CD8-positive, alpha-beta T cell (primary cell): ENCODE measurements at regions of chr1 and their contacts with region 1.

Region 1: GRCh38 chr1:205284343-205285144 is 37.0 kb downstream of the NUAK2 start:
- DNase-seq: peak; percentile 78 to 96 (median 93)
- ATAC-seq: peak; percentile 62
- H3K4me3 ChIP-seq: peak overlapping the region; percentile 34 to 40
- H3K4me3 Mint-ChIP-seq: peak overlapping the region; percentile 83
- H3K27ac ChIP-seq: peak overlapping the region; percentile 56 to 71
- H3K27ac Mint-ChIP-seq: peak overlapping the region; percentile 96
- H3K4me1 ChIP-seq: peaks cover 81% of the 10 kb centered on the region
- H3K4me1 Mint-ChIP-seq: peaks cover 85% of the 10 kb centered on the region
- H3K27me3 ChIP-seq: no peaks in the 10 kb centered on the region
- H3K27me3 Mint-ChIP-seq: no peaks in the 10 kb centered on the region
- CTCF ChIP-seq: no peak

Region 2: DNA sequence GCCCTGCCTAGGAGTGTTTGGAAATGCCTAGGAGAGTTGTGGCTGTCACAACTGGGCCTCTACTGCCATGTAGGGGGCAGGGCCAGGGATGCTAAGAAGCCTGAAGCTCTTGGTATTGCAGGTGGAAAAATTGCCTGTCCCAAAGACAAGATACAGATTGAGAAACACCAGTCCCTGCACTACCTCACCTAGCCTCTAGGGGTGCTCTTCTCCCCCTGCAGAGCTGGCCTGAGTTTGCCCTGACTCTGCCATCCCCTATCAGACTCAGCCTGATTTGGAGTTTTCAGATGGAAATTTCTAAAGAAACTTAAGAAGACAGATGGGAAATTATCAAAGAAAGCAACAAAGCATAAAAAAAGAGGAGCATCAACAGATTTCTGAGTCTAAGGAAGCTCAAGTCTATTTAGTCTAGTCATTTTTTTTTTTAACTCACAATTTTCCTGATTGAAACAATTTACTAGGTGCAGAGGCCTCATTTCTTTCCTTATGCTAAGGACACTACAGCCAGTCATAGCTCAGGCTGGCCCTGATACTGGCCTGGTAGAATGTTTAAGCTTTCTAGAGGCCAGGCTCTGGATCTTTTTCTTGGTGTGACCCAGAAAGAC is 537.6 kb before region 1 on chr1:
- CTCF ChIA-PET with region 1: no interaction called
- POLR2A ChIA-PET with region 1: no interaction called
- intact Hi-C with region 1: no loop called
- DNase-seq: peak; percentile 10 to 72 (median 52)
- ATAC-seq: peak; percentile 86
- H3K4me3 ChIP-seq: no peak overlapping the region
- H3K4me3 Mint-ChIP-seq: no peak overlapping the region
- H3K27ac ChIP-seq: no peak overlapping the region
- H3K27ac Mint-ChIP-seq: no peak overlapping the region
- H3K4me1 ChIP-seq: no peaks in the 10 kb centered on the region
- H3K4me1 Mint-ChIP-seq: no peaks in the 10 kb centered on the region
- H3K27me3 ChIP-seq: no peaks in the 10 kb centered on the region
- H3K27me3 Mint-ChIP-seq: peaks cover 8% of the 10 kb centered on the region
- CTCF ChIP-seq: peak; percentile 98

Region 3: DNA sequence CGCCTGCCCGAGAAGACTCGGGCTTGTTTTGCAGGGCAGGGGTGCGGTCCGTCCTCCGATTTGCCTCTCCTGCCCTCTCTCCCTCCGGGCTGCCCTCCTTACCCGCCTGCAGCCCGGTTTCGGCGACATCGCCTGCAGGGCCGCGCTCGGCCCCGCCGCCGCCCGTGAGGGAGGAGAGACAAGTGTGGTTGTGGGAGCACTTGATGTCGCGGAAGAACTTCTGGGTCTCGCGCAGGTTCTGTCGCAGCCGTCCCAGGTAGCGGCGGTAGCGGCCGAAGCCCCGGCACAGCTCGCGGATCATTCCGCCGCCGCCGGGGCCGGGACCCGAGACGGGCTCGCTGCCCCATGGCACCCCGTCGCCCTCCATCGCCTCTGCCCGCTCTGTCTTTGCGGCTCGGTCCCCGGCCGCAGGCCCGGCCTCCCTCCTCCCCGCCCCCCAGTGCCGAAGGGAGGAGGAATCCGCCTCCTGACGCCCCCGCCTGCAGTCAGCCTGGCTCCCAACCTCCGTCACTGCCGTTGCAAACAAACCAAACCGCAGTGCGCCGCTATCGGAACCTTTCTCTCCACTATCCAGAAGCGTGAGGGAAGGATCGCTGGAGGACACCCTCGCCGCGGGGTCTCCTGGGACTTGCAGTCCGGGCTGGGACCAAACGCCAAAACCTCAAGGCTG is 73.2 kb before region 1 on chr1 and contains the start of gene DSTYK:
- CTCF ChIA-PET with region 1: no interaction called
- POLR2A ChIA-PET with region 1: interaction called, 4 read pairs
- intact Hi-C with region 1: loop called (anchors 1 to 2 kb)
- DNase-seq: peak; percentile 83 to 96 (median 91)
- ATAC-seq: peak; percentile 92
- H3K4me3 ChIP-seq: peak within 1 kb of the TSS; percentile 55 to 93
- H3K4me3 Mint-ChIP-seq: peak within 1 kb of the TSS; percentile 96
- H3K27ac ChIP-seq: peak within 1 kb of the TSS; percentile 58 to 80
- H3K27ac Mint-ChIP-seq: peak within 1 kb of the TSS; percentile 98
- H3K4me1 ChIP-seq: peaks cover 15% of the 10 kb centered on the region
- H3K4me1 Mint-ChIP-seq: peaks cover 50% of the 10 kb centered on the region
- H3K27me3 ChIP-seq: no peaks in the 10 kb centered on the region
- H3K27me3 Mint-ChIP-seq: no peaks in the 10 kb centered on the region
- CTCF ChIP-seq: no peak
- total RNA-seq, gene DSTYK: 15.4 to 17.2 TPM

Region 4: DNA sequence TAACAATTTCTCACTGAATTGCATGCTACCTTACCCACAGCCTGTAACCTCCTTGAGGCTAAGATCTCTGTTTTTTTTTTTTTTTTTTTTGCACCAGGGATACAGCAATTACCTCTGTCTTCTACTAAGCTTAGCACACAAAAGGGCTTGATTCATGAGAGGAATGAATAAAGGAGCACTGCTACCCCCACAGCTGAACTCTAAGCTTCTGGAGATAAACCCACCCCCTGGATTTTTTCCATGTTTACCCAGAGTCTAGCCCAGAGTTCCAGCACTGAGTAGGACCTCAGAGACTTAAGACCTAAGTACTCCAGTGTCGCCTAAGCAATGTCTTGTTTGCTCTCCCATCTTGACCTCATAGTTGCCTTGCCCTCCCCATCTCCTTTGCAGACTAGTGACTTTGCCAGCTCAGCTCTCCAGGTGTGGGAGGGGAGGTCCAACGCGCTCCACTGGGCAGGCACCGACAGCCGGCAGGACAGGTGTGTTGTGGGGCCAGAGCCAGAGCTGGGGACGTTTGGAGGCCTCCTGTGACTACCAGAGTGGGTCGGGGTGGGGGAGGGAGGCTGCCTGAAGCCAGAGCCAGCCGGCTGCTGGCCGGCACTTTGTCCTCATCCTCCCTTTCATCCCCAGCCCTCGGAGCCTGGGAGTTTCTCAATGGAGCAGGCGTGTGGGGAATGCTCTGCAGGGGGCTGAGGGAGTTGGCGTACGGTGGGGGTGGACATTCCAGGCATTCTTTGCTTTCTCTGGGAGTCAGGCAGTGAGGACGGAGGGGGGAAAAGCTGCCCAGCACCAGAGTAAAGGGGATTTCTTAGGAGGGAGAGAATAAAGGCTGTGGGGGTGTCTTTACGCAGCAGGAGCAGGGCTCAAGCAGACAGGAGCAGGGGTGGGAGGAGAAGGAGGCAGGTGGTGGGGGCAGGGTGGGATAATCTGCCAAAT is 16.6 kb after region 1 on chr1:
- CTCF ChIA-PET with region 1: interaction called, 17 read pairs
- POLR2A ChIA-PET with region 1: interaction called, 17 read pairs
- intact Hi-C with region 1: loop called in 1 of 2 experiments (anchors 2 kb)
- DNase-seq: no peak
- ATAC-seq: no peak
- H3K4me3 ChIP-seq: no peak overlapping the region
- H3K4me3 Mint-ChIP-seq: no peak overlapping the region
- H3K27ac ChIP-seq: no peak overlapping the region
- H3K27ac Mint-ChIP-seq: peak overlapping the region; percentile 41
- H3K4me1 ChIP-seq: peaks cover 32% of the 10 kb centered on the region
- H3K4me1 Mint-ChIP-seq: peaks cover 58% of the 10 kb centered on the region
- H3K27me3 ChIP-seq: no peaks in the 10 kb centered on the region
- H3K27me3 Mint-ChIP-seq: no peaks in the 10 kb centered on the region
- CTCF ChIP-seq: no peak

Region 5: GRCh38 chr1:205321164-205321958 is 36.8 kb after region 1 on chr1 and contains the start of gene NUAK2:
- CTCF ChIA-PET with region 1: interaction called, 1,393 read pairs
- POLR2A ChIA-PET with region 1: interaction called, 161 read pairs
- intact Hi-C with region 1: loop called (anchors 1 kb)
- DNase-seq: peak; percentile 56 to 92 (median 86)
- ATAC-seq: peak; percentile 88
- H3K4me3 ChIP-seq: peak within 1 kb of the TSS; percentile 73 to 99
- H3K4me3 Mint-ChIP-seq: peak within 1 kb of the TSS; percentile 98
- H3K27ac ChIP-seq: peak within 1 kb of the TSS; percentile 68 to 72
- H3K27ac Mint-ChIP-seq: peak within 1 kb of the TSS; percentile 96
- H3K4me1 ChIP-seq: peaks cover 50% of the 10 kb centered on the region
- H3K4me1 Mint-ChIP-seq: peaks cover 71% of the 10 kb centered on the region
- H3K27me3 ChIP-seq: no peaks in the 10 kb centered on the region
- H3K27me3 Mint-ChIP-seq: no peaks in the 10 kb centered on the region
- CTCF ChIP-seq: peak; percentile 32
- total RNA-seq, gene NUAK2: 17.1 to 18.3 TPM

Region 6: DNA sequence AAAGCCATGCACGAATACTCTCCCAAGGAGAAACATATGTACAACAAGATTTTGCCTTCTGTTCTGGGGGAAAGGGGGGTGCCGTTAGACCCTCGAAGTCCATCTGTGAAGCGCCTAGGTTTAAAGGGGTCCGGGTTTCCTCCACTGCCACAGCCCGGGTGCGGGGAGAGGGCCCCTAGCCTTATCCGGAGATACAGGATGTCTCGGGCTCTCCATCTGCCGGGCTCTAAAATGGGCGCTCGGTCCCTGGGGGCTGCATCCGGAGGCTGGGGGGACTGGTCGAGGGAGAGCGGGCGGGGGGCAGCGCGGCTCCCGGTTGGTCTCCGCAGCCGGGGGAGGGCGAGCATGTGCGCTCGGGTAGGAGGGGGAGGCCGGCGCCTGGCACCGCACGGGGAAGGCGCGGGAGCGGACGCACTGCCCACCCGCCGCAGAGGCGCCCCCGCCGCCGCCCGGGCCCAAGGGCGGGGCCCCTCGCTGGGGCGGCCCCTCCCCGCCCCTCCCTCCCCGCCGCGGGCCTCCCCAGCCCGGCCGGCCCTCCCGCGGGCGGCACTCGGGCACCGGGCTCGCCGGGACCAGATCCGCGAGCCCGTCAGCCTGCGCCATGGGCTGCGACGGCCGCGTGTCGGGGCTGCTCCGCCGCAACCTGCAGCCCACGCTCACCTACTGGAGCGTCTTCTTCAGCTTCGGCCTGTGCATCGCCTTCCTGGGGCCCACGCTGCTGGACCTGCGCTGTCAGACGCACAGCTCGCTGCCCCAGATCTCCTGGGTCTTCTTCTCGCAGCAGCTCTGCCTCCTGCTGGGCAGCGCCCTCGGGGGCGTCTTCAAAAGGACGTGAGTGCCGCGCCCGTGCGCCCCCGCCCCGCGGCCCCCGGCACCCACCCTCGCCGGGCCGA is 284.2 kb after region 1 on chr1:
- CTCF ChIA-PET with region 1: no interaction called
- POLR2A ChIA-PET with region 1: no interaction called
- intact Hi-C with region 1: no loop called
- DNase-seq: peak in 2 of 9 experiments; percentile 23 to 36
- ATAC-seq: peak; percentile 31
- H3K4me3 ChIP-seq: no peak overlapping the region
- H3K4me3 Mint-ChIP-seq: peak overlapping the region; percentile 76
- H3K27ac ChIP-seq: no peak overlapping the region
- H3K27ac Mint-ChIP-seq: no peak overlapping the region
- H3K4me1 ChIP-seq: peaks cover 4% of the 10 kb centered on the region
- H3K4me1 Mint-ChIP-seq: peaks cover 5% of the 10 kb centered on the region
- H3K27me3 ChIP-seq: peaks cover 13 to 14% of the 10 kb centered on the region in 2 experiments
- H3K27me3 Mint-ChIP-seq: peaks cover 47% of the 10 kb centered on the region
- CTCF ChIP-seq: no peak

Region 7: DNA sequence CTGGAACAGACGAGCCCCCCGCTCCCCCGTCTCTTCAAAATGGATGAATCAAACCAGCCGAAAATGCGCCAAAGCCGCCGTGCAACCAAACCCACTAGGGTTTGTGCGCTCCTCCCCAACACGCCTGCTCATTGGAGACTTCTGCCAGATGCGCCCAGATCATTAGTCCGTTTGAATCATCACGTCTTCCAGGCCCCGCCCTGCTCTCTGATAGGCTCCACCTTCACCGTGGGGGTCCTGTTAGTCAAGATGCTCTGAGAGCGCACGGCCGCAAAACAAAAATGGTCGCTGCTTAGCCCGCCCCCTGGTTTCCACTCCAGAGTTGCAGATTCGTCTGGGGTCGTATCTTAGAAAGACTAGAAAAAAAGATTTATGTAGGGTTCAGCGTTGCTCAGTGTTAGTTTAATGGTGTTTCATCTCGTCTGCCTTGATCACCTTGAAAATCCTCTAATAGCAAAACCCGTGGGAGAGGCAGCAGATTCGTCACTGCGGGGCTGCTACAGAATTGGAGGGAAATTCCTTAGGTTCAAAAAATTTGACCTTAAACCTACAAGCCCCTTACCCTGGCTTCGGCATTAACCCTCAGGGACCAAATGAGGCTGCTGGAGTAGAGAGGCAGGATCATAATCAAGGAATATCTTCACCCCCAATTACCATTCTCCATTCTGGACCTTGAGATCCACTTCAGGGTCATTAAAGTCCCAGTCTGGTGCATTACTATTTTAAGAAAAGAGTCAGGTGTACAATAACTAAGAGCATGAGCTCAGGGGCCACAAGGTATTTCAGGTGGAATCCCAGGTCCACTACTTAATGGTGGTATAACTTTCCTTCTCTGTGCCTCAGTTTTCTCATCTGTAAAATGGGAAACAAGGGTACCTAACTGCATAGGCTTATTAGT is 465.8 kb after region 1 on chr1 and contains the start of gene NUCKS1:
- CTCF ChIA-PET with region 1: no interaction called
- POLR2A ChIA-PET with region 1: interaction called, 5 read pairs
- intact Hi-C with region 1: loop called (anchors 1 kb)
- DNase-seq: peak; percentile 91 to 99 (median 96)
- ATAC-seq: peak; percentile 77
- H3K4me3 ChIP-seq: peak within 1 kb of the TSS; percentile 78 to 91
- H3K4me3 Mint-ChIP-seq: peak within 1 kb of the TSS; percentile 93
- H3K27ac ChIP-seq: peak within 1 kb of the TSS; percentile 79 to 82
- H3K27ac Mint-ChIP-seq: peak within 1 kb of the TSS; percentile 98
- H3K4me1 ChIP-seq: peaks cover 30% of the 10 kb centered on the region
- H3K4me1 Mint-ChIP-seq: peaks cover 37% of the 10 kb centered on the region
- H3K27me3 ChIP-seq: no peaks in the 10 kb centered on the region
- H3K27me3 Mint-ChIP-seq: no peaks in the 10 kb centered on the region
- CTCF ChIP-seq: no peak
- total RNA-seq, gene NUCKS1: 70.5 to 95.3 TPM

Region 8: DNA sequence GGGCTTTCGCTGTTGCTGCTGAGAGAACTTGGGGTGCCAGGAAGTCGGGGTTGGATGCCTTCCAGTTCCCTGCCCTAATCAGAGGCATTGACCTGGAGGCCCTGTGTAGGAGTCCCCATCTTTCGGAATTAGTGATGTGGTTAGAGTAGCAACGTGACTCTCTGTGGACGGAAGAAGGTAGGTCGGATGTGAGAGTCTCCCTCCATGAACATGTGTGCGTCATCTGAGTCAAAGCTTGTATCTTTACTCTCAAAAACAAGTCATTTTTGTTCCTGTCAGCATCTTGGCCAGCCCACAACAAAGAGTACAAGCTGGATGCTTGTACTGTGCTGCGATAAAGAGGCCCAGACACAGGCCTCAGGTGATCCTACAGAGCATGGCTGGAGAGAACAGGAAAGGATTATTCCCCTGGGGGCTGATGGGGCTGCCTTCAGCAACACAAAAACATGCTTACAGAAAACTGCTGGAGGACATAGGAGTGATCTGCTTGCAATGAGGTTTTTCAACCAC is 1518.7 kb after region 1 on chr1:
- CTCF ChIA-PET with region 1: no interaction called
- POLR2A ChIA-PET with region 1: no interaction called
- intact Hi-C with region 1: loop called in 1 of 2 experiments (anchors 5 kb)
- DNase-seq: peak; percentile 59 to 98 (median 74)
- ATAC-seq: peak; percentile 91
- H3K4me3 ChIP-seq: no peak overlapping the region
- H3K4me3 Mint-ChIP-seq: peak overlapping the region; percentile 40
- H3K27ac ChIP-seq: peak overlapping the region; percentile 51 to 83
- H3K27ac Mint-ChIP-seq: peak overlapping the region; percentile 96
- H3K4me1 ChIP-seq: peaks cover 46% of the 10 kb centered on the region
- H3K4me1 Mint-ChIP-seq: peaks cover 71% of the 10 kb centered on the region
- H3K27me3 ChIP-seq: no peaks in the 10 kb centered on the region
- H3K27me3 Mint-ChIP-seq: no peaks in the 10 kb centered on the region
- CTCF ChIP-seq: no peak